Activated CD4-positive, alpha-beta T cell treated with anti-CD3 and anti-CD28 coated beads for 36 hours (primary cell): ENCODE measurements at regions of chr3 and their contacts with region 1.

Region 1: GRCh38 chr3:108818404-108818803 is 4.2 kb upstream of the TRAT1 start:
- DNase-seq: peak; percentile 76
- ATAC-seq: peak; percentile 90
- H3K4me3 Mint-ChIP-seq: peak overlapping the region; percentile 18
- H3K27ac Mint-ChIP-seq: peak overlapping the region; percentile 22
- H3K4me1 Mint-ChIP-seq: peaks cover 36% of the 10 kb centered on the region
- H3K27me3 Mint-ChIP-seq: no peaks in the 10 kb centered on the region

Region 2: DNA sequence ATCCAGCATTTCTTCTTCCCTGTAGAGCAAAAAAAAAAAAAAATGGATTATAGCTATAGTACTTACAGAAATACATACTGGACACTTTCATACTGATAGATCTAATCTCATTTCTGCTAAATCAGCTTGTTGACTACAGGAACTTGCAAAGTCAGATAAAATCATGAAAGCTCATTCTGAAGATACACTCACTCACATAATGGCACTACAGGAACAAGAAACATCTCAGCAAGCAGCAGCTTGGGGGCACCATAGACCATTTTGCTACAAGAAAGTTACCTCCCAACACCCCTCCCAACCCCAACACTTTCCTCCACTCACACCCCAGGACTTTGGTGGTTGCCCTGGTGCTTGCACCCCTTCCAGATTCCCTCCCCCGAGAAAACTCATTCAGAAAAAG is 312.6 kb before region 1 on chr3:
- CTCF ChIA-PET with region 1: no interaction called
- POLR2A ChIA-PET with region 1: no interaction called
- intact Hi-C with region 1: no loop called
- DNase-seq: no peak
- ATAC-seq: no peak
- H3K4me3 Mint-ChIP-seq: no peak overlapping the region
- H3K27ac Mint-ChIP-seq: no peak overlapping the region
- H3K4me1 Mint-ChIP-seq: no peaks in the 10 kb centered on the region
- H3K27me3 Mint-ChIP-seq: no peaks in the 10 kb centered on the region

Region 3: DNA sequence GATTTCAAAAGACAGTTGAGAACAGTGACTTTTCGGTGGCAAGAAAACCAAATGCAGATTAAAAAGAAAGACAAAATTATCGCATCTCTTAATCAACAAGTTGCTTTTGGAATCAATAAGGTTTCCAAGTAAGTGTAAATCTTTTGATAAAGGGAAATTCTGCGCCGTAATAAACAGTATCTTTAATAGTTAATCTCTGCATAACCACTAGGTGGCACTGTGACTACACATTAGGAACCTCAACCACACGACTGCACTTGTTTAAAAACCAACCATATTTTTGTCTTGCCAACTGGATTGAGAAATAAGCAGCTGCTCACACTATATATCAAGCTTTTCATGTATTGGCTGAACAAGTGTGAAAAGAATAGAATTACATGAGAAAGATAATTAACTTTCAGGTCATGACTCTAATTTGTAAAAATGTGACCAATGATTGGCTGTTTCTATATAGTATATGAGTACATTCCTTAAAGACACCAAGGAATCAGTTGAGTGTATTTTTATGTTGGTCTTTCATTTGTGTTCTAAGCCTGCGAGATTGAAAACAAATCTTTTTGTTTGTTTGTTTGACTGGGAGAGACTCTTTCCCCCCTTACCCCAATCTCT is 156.2 kb before region 1 on chr3:
- CTCF ChIA-PET with region 1: interaction called, 13 read pairs
- POLR2A ChIA-PET with region 1: interaction called, 5 read pairs
- intact Hi-C with region 1: loop called (anchors 1 kb)
- DNase-seq: peak; percentile 63
- ATAC-seq: peak; percentile 69
- H3K4me3 Mint-ChIP-seq: no peak overlapping the region
- H3K27ac Mint-ChIP-seq: peak overlapping the region; percentile 6
- H3K4me1 Mint-ChIP-seq: peaks cover 15% of the 10 kb centered on the region
- H3K27me3 Mint-ChIP-seq: no peaks in the 10 kb centered on the region

Region 4: GRCh38 chr3:108862865-108863798 is 44.7 kb after region 1 on chr3:
- CTCF ChIA-PET with region 1: no interaction called
- POLR2A ChIA-PET with region 1: interaction called, 4 read pairs
- intact Hi-C with region 1: loop called in 1 of 2 experiments (anchors 2 kb)
- DNase-seq: peak; percentile 53
- ATAC-seq: peak; percentile 87
- H3K4me3 Mint-ChIP-seq: peak overlapping the region; percentile 51
- H3K27ac Mint-ChIP-seq: peak overlapping the region; percentile 99
- H3K4me1 Mint-ChIP-seq: peaks cover 45% of the 10 kb centered on the region
- H3K27me3 Mint-ChIP-seq: no peaks in the 10 kb centered on the region